ENCODE measurements at regions of chr7 and their contacts with region 1.

Region 1: GRCh38 chr7:7424151-7424873 is 111.4 kb downstream of the COL28A1 start:
- DNase-seq: peak; percentile 39 to 72
- ATAC-seq: peak; percentile 98

Region 2: DNA sequence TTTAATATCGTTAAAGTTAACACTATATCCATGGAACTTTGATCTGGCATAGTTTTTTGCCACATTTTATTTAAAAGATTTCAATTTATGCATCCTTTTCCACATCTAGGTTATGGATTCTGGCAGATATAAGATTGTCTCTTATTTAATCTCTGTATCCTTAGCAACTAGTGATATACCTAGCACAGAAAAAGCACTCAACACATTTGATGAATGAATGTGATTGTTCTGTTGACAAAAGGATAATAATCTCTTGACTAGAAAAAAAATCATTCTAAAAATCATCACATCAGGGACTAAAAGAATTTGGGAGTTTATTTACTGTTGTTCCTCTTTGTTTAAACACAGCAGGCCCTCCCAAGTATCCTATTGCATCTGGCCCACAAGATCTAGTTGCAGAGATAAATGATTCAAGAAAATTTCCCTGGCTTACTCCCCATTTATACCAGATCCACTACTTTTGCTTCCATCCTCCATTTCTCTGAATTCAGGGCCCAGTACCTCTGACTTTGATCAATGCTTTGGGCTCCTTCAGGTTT is 326.0 kb before region 1 on chr7:
- intact Hi-C with region 1: no loop called
- DNase-seq: no peak
- ATAC-seq: no peak

Region 3: GRCh38 chr7:7542251-7542835 is 118.0 kb after region 1 on chr7:
- intact Hi-C with region 1: loop called in 1 of 2 experiments (anchors 5 kb)
- DNase-seq: no peak
- ATAC-seq: peak; percentile 48

Region 4: DNA sequence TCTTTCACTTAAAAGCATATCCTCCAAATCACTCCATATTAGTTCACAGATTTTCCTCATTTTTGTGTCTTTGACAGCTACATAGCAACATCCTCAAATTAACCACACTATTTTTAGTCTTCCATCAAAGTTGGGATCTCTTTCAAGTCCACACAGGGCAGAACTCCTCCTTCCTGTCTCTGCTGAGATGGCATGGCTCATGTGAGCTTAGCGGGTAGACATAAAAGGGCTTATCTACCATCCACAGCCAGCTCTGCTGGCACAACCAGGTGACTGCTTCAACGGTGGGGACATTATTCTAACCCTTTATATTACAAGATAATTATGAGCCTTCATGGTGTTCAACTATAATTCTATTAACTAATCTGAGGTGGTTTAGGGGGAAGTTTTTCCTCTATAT is 802.2 kb after region 1 on chr7:
- intact Hi-C with region 1: loop called in 1 of 2 experiments (anchors 10 kb)
- DNase-seq: no peak
- ATAC-seq: no peak